ENCODE measurements at regions of chr11 and their contacts with region 1.

Region 1: DNA sequence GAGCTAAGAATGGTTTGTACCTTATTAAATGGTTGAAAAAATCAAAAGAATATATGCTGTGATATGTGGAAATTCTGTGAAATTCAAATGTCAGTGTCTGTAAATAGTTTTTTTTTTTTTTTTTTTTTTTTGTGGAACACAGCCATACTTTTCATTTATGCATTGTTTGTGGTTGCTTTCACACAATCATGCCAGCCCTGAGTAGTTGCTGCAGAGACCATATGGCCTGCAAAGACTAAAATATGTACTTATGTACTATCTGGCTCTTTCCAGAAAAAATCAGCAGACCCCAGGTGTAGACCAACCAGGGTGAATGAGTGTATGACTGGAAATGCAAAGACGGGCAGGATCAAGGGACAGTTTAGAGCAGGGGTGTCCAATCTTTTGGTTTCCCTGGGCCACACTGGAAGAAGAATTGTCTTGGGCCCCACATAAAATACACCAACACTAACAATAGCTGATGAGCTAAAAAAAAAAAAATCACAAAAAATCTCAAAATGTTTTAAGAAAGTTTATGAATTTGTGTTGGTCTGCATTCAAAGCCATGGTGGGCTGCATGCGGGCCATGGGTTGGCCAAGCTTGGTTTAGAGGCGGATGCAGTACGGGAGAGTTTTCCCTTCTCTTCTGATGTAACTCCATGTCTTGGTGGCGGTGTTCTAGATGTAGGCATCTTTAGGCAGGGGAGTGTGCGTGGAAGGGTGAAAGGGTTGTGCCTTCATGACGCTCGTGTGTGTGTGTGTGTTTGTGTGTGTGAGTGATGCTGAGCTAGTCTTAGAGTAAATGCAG is 98.5 kb downstream of the PTPRJ start:
- DNase-seq: no peak
- ATAC-seq: no peak
- H3K4me3 Mint-ChIP-seq: no peak overlapping the region
- H3K27ac Mint-ChIP-seq: peak overlapping the region; percentile 57; the same call in 1 of the 2 replicates
- H3K4me1 Mint-ChIP-seq: peaks cover 13% of the 10 kb centered on the region
- H3K27me3 Mint-ChIP-seq: no peaks in the 10 kb centered on the region
- CTCF ChIP-seq: no peak

Region 2: GRCh38 chr11:48063424-48063978 is 15.4 kb before region 1 on chr11:
- CTCF ChIA-PET with region 1: no interaction called
- POLR2A ChIA-PET with region 1: interaction called, 12 read pairs
- DNase-seq: no peak
- ATAC-seq: no peak
- H3K4me3 Mint-ChIP-seq: no peak overlapping the region
- H3K27ac Mint-ChIP-seq: no peak overlapping the region
- H3K4me1 Mint-ChIP-seq: peaks cover 27% of the 10 kb centered on the region
- H3K27me3 Mint-ChIP-seq: no peaks in the 10 kb centered on the region
- CTCF ChIP-seq: no peak

Measured in WTC11 (cell line).